ENCODE measurements at regions of chr4 and their contacts with region 1.

Region 1: DNA sequence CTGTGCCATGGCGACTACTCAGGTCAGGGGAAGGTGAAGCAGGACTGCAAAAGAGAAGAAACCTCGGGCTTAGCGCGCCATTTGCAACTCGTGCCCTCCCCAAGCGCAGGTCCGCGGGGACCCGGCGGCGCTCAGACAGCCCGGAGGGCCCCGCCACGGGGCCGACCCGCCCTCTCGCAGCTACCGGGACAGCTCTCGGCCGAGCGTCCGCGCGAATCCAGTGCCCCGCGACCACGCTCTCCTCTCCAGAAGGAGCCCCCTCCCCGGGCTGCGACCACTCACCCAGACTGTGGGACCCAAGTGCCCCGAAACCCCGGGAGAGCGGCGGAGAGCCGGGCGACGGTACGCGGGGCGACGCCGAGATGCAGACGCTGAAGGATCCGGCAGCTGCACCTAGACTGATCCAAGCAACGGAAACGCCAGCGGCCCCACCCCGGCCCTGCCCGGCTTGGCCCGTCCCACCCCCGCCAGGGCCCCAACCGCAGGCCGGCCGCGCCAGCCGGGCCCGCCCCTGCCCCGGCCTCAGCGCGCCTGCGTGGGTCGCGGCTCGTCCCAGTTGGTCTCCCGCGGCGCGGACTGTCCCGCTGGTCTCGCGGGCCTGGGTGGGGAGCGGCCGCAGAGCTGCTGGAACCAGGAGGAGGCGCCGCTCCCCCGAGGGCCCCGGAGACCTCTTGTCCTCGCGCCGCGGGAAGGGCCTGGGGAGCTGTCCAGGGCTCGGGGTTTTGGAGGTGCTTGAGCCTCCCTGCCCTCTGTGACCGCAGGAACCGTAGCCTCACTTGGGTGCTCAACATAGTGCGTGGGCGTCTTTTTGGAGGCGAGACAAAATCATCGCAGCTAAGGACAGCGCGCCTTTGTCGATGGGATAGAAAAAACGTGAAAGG is at the start of gene ANXA5:
- DNase-seq: peak; percentile 52
- H3K4me3 ChIP-seq: peak within 1 kb of the TSS; percentile 92
- CTCF ChIP-seq: peak; percentile 69

Region 2: DNA sequence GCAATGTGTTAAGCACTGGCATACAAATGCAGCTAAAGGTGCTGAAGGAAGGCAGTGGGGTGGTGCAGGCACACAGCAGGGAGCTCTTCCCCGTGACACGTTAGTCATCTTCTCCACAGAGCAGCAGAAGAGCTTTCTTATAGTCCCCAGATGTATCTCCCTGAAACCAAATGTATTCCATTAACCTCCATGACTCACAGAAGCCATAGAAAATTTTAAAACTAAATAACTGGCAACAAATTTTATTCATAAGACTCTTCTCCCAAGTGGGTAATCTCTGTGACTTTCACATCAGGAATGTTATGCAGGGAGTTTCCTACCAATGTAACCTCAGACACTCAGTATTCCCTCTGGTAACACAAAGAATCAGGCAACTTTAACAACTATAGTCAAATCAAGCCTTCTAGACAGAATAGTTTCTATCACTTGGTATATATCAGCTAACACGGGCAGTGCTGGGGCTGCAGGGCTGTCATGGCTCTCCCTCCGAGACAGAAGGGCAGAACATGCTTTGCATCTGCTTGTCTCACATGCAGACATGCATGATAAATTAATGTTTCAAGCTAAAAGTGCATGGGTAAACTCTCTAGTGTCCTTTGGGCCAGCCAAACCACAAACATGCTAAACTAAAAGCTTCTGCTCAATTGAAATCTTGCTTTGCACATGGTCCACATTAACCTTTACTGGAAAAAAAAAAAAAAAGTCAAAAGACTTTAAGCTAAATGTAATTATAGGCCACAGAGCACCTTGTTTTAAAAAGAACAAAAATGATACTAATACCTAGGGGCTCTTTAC is 28.3 kb before region 1 on chr4:
- CTCF ChIA-PET with region 1: interaction called, 3 read pairs
- POLR2A ChIA-PET with region 1: interaction called, 34 read pairs
- DNase-seq: peak; percentile 95
- H3K4me3 ChIP-seq: no peak overlapping the region
- CTCF ChIP-seq: no peak

Region 3: DNA sequence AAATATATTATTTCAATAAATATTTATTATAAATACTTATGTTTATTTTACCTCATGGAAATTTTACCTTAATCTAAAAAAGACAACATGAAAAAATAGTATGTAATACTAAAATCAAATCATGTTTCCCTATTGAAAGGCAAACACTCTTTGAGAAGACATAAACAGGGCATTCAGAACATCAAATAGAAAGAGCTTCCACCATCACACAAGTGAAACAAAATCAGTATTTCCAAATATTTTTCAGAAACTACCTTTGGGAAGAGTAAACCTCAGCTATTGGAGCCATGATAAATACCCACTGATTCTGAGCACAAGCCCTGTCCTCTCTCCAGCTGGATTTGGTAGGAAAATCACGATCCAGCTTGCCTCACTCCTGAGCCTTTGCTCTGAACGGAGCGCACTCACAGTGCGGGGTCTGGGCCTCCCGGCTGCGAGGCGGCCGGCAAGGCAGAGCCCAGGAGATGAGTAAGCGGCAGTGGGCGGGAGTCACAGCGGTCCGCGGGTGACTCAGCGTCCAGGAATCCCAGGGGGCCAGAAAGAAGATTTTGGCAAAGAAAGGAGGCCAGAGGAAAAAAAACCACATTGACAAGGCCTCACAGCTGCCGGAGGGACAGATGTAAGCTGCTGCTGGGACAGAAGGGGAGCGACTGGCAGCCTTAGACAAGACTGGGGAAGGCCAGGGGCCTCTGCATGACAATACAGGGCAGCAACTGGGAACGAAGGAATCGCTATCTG is 14.6 kb after region 1 on chr4:
- CTCF ChIA-PET with region 1: interaction called, 10 read pairs
- POLR2A ChIA-PET with region 1: interaction called, 25 read pairs
- DNase-seq: peak; percentile 81
- H3K4me3 ChIP-seq: peak overlapping the region; percentile 46
- CTCF ChIP-seq: no peak

Region 4: DNA sequence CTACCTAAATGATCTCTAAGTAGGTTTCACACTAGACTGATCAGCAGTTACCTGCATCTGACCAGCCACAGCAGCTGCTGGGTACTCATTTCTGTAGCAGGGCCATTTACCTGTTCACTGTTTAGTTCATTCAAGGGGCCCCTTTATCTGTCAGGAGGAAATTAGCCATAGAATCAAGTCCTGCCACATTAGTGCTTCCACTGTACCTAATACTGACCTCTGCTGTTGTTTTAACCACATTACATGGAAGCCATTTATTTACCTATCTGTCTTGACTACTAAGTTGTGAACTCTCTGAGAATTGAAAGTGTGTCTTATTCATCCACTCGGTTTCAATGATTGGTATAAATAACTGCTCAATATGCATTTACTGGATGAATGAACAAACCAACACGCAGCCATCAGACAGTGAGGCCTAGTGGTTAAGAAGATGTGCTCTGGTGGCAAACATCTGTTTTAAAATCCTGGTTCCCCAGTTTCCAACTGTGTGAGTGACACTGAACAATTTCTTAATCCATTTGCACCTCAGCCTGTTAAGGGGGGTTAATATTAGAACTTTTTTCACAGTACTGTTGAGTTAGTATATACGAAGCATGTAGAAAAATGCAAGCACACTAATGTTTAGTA is 29.9 kb after region 1 on chr4:
- CTCF ChIA-PET with region 1: interaction called, 5 read pairs
- POLR2A ChIA-PET with region 1: interaction called, 24 read pairs
- DNase-seq: no peak
- H3K4me3 ChIP-seq: no peak overlapping the region
- CTCF ChIP-seq: peak; percentile 51

Region 5: GRCh38 chr4:122003335-122003734 is 306.5 kb after region 1 on chr4:
- CTCF ChIA-PET with region 1: no interaction called
- POLR2A ChIA-PET with region 1: no interaction called
- DNase-seq: no peak
- H3K4me3 ChIP-seq: no peak overlapping the region
- CTCF ChIP-seq: peak; percentile 30